Activated T-helper 1 cell treated with anti-CD3 and anti-CD28 coated beads, Interleukin-12 subunit alpha, Interleukin-12 subunit beta, Interleukin-2, Interleukin-4 antibody, amounts not matched to agents 30 ng/mL and 10 ng/mL and 1 ng/mL, durations not matched to agents 14 hours and 24 hours and 36 hours (primary cell): ENCODE measurements at regions of chr6 and their contacts with region 1.

Region 1: DNA sequence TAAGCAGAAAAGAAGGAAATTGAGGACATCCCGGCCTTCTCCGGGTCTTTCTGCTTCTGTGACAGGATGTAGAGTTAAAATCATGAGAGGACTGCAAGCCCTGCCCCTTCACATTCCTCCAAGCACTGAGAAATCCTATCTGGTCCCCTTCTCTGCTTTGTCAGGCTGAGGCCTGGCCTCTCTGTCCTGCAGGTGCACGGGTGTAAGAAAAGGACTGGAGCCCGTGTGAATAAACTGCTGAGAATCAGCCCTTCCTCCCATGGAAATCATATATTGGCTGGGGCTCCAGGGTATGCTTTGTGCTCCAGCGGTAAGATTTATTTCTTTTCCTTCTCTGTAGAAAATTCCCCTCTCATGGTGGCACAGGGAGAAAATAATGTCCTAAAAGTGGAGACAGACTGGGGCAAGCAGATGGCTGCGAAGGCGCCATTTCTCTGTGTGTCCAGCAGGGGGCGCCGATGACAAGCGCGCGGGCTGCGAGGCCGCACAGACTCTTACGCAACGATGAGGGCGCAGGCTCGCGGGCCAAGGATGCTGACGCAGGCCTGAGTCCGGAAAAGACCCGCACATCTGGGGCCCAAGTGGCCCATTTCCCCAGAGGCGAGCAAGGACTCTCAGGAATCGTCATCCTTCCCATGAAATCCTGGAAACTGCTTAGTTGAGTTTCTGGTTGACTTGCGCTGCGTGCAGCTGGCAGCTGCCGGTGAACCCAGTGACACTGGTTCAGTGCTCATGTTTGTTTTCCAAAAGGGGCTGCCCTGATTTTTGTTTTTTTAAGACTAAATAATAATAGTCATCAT is 258.6 kb downstream of the ADGB start:
- DNase-seq: peak; percentile 66
- H3K4me3 Mint-ChIP-seq: no peak overlapping the region
- H3K27ac Mint-ChIP-seq: peak overlapping the region; percentile 54
- H3K4me1 Mint-ChIP-seq: peaks cover 36% of the 10 kb centered on the region
- H3K27me3 Mint-ChIP-seq: peaks cover 3% of the 10 kb centered on the region

Region 2: GRCh38 chr6:146423452-146423851 is 433.9 kb before region 1 on chr6:
- intact Hi-C with region 1: no loop called
- DNase-seq: no peak
- H3K4me3 Mint-ChIP-seq: no peak overlapping the region
- H3K27ac Mint-ChIP-seq: no peak overlapping the region
- H3K4me1 Mint-ChIP-seq: no peaks in the 10 kb centered on the region
- H3K27me3 Mint-ChIP-seq: peaks cover 2% of the 10 kb centered on the region

Region 3: GRCh38 chr6:146876271-146877151 is 19.1 kb after region 1 on chr6:
- intact Hi-C with region 1: loop called (anchors 1 kb)
- DNase-seq: no peak
- H3K4me3 Mint-ChIP-seq: no peak overlapping the region
- H3K27ac Mint-ChIP-seq: peak overlapping the region; percentile 32
- H3K4me1 Mint-ChIP-seq: peaks cover 20% of the 10 kb centered on the region
- H3K27me3 Mint-ChIP-seq: peaks cover 2% of the 10 kb centered on the region

Region 4: DNA sequence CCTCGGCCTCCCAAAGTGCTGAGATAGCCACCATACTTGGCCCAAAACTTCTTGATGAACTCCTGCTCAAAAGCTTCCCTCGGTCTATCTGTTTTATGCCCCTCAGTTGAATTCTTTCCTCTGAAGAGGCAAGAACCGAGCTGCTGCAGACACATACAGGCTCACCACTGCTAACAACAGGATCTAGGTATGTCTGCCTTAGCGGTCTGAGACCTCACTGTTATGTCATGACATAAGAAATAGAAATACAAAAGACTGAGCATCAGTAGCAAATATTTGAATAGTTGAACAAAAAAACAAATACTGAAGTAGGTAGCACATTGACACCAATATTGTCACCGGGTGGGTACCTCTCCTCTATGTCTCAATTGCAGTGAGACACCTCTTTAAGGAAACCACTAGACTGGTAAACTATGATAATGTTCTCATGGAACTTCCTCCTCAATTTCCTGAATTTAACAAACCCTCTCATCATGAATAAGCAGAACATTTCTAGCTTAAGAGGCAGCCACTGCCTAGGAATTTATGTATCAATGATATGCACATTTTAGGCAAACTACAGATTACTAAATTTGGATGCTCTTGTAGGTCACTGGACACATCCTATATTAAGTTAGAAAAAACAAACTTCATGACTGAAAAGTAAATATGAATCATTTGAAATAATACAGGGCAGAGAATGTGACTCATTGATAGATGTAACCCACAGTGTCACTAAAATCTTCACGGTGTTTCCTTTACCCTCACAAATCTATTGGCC is 337.5 kb after region 1 on chr6:
- intact Hi-C with region 1: loop called (anchors 2 kb)
- DNase-seq: no peak
- H3K4me3 Mint-ChIP-seq: peak overlapping the region; percentile 9
- H3K27ac Mint-ChIP-seq: peak overlapping the region; percentile 85
- H3K4me1 Mint-ChIP-seq: peaks cover 15% of the 10 kb centered on the region
- H3K27me3 Mint-ChIP-seq: no peaks in the 10 kb centered on the region

Region 5: DNA sequence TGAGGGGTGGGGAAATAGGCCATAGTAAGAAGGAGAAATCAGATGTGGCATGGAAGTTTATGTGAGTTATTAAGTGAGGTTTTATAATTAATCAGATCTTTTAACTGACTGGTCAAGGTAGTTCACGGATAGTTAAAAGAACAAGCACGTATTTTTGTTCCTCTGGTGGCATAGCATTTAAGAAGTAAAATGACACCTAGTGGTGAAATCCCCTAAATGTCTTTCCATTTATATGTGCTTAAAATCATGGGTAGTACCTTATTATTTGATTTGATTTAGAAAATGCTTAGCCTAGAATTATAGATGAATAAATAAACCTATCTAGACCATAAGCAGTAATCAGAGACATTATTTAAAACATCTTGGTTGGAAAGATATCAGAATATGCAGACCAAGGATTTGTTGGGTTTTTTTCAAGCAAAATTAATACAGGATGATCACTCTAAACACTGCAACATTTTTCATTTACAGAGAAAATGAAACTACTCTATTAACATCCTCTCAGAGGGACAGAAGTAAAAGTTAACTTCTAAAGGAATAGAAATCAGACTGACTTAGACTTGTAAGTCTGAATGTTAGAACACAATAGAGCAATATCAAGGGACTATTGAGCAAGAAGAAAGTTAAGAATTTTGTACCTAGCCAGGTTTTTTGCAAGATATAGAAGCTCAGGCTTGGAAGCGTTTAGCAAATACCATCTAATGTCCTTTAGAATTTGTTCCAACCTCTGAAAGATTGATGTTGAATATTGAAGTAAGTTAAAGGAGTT is 427.9 kb after region 1 on chr6:
- intact Hi-C with region 1: loop called (anchors 1 kb)
- DNase-seq: no peak
- H3K4me3 Mint-ChIP-seq: no peak overlapping the region
- H3K27ac Mint-ChIP-seq: peak overlapping the region; percentile 11
- H3K4me1 Mint-ChIP-seq: peaks cover 43% of the 10 kb centered on the region
- H3K27me3 Mint-ChIP-seq: no peaks in the 10 kb centered on the region

Region 6: GRCh38 chr6:147382945-147383554 is 525.7 kb after region 1 on chr6:
- intact Hi-C with region 1: loop called (anchors 2 kb)
- DNase-seq: no peak
- H3K4me3 Mint-ChIP-seq: no peak overlapping the region
- H3K27ac Mint-ChIP-seq: no peak overlapping the region
- H3K4me1 Mint-ChIP-seq: peaks cover 7% of the 10 kb centered on the region
- H3K27me3 Mint-ChIP-seq: no peaks in the 10 kb centered on the region

Region 7: GRCh38 chr6:147407571-147407970 is 550.2 kb after region 1 on chr6:
- intact Hi-C with region 1: no loop called
- DNase-seq: no peak
- H3K4me3 Mint-ChIP-seq: no peak overlapping the region
- H3K27ac Mint-ChIP-seq: no peak overlapping the region
- H3K4me1 Mint-ChIP-seq: no peaks in the 10 kb centered on the region
- H3K27me3 Mint-ChIP-seq: no peaks in the 10 kb centered on the region

Region 8: GRCh38 chr6:148440877-148441453 is 1583.6 kb after region 1 on chr6:
- intact Hi-C with region 1: loop called (anchors 10 kb)
- DNase-seq: no peak
- H3K4me3 Mint-ChIP-seq: no peak overlapping the region
- H3K27ac Mint-ChIP-seq: no peak overlapping the region
- H3K4me1 Mint-ChIP-seq: peaks cover 12% of the 10 kb centered on the region
- H3K27me3 Mint-ChIP-seq: peaks cover 19% of the 10 kb centered on the region